Activated CD4-positive, alpha-beta memory T cell treated with anti-CD3 and anti-CD28 coated beads, Interleukin-2, amount 10 ng/mL, durations not matched to agents 7 days and 5 days (primary cell): ENCODE measurements at regions of chr7 and their contacts with region 1.

Region 1: GRCh38 chr7:38660427-38661099 is 29.4 kb upstream of the AMPH start:
- DNase-seq: peak; percentile 36
- H3K4me3 Mint-ChIP-seq: no peak overlapping the region
- H3K27ac Mint-ChIP-seq: no peak overlapping the region
- H3K4me1 Mint-ChIP-seq: no peaks in the 10 kb centered on the region
- H3K27me3 Mint-ChIP-seq: peaks cover 35% of the 10 kb centered on the region

Region 2: GRCh38 chr7:38398725-38399321 is 261.7 kb before region 1 on chr7:
- CTCF ChIA-PET with region 1: interaction called, 32 read pairs
- POLR2A ChIA-PET with region 1: no interaction called
- DNase-seq: peak; percentile 51
- H3K4me3 Mint-ChIP-seq: no peak overlapping the region
- H3K27ac Mint-ChIP-seq: no peak overlapping the region
- H3K4me1 Mint-ChIP-seq: peaks cover 4% of the 10 kb centered on the region
- H3K27me3 Mint-ChIP-seq: peaks cover 16% of the 10 kb centered on the region

Region 3: DNA sequence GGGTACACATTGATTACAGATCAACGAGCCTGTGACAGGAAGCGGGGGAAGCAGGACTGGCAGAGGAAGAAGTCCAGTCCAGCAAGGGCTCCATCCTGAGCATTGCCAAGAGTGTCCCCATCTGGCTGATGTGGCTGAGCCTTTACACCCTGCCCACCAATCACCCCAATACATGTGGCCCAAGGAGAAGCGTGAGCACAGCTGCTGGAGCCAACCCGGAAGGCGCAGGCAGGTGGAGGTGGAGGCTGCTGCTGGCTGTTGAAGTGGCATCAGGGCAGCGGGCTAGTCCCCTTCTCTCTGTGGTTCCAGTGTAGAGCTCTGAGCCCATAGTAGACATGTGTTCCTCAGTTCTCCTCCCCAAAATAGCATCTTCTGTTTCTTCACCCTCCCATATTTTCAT is 22.6 kb before region 1 on chr7:
- CTCF ChIA-PET with region 1: no interaction called
- POLR2A ChIA-PET with region 1: no interaction called
- DNase-seq: no peak
- H3K4me3 Mint-ChIP-seq: no peak overlapping the region
- H3K27ac Mint-ChIP-seq: no peak overlapping the region
- H3K4me1 Mint-ChIP-seq: no peaks in the 10 kb centered on the region
- H3K27me3 Mint-ChIP-seq: peaks cover 18% of the 10 kb centered on the region

Region 4: DNA sequence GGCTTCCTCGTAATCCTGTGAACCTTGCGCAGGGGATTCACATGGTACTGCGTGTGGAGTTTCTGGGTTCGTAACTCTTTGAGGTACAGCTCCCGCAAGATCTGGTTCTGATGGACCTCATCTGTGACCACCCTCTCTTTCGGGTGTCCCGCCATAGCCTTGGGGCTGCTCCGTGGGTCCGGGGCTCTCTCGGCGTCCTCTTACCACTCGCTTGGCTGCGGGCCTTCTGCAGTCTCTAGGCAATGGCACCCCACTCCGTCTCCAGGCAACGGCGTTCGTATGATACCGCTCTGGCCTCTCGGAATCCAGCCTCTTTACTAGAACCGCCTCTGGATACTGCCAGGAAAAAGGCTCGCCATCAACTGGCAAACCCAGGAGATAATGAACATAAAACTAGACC is 25.3 kb after region 1 on chr7:
- CTCF ChIA-PET with region 1: no interaction called
- POLR2A ChIA-PET with region 1: no interaction called
- DNase-seq: no peak
- H3K4me3 Mint-ChIP-seq: no peak overlapping the region
- H3K27ac Mint-ChIP-seq: no peak overlapping the region
- H3K4me1 Mint-ChIP-seq: no peaks in the 10 kb centered on the region
- H3K27me3 Mint-ChIP-seq: peaks cover 14% of the 10 kb centered on the region